Posterior cingulate gyrus (tissue), 11 donors: ENCODE measurements at regions of chr7 and their contacts with region 1.

Region 1: DNA sequence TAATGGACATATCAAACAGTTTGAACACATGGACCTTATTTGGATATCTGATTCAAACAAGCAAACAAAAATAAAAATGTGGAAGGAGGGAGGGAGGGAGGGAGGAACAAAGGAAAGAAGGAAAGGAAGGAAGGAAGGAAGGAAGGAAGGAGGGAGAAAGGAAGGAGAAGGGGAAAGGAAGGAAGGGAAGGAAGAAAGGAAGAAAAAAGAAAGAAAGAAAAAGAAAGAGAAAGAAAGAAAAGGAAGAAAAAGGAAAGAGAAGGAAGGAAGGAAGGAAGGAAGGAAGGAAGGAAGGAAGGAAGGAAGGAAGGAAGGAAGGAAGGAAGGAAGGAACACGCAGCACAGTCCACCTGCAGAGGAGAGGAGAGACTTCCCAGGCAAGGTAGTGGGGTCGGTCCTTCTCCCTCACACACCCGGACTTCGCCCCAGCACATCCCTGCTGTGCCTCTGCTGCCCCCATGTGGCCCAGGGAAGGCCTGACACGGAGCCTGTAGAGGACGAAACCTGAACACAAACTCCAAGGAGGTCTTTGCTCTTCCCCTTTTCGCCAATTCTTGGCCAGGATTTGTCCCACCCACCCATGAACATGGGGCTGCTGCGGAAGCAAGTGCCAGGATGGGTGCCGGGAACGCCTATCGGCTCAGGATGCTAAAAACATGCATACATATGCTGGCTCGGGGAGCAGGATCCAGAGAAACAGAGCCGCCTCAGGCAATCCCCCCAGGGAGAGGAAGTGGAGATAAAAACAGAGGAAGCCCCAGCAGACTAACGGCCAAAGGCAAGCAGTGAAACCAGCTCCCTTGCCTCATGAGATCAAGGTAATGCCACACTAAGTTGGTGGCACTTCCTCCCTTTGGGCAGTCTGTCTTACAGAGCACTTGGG is 52.3 kb upstream of the DGKI start:
- DNase-seq: peak; percentile 70 to 98 (median 86)

Region 2: DNA sequence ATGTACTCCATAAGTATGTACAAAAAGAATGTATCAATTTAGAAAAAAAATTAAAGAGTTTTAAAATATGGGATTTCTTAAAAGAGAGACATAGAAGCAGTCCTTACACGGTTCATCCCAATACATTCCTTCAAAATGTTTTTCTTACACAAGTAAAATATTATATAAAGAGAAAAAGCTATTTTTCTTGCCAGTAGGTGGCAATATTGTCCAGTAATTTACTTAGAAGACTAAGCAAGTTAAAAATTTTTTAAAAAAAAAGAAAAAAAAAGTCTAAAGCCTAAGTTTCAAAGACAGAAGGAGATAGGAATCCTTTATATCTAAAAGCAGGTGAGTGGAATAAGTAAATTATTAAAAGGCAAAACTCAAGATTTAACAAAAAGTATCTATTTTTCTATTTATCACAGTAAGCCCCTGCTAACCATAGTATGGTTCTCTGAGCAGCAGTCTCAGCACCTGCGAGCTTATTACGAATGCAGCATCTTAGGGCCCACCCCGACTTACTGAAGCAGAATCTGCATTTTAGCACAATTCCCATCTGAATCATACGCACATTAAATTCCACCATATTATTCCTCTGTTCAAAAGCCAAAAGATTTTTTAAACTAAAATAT is 292.9 kb before region 1 on chr7:
- intact Hi-C with region 1: loop called (anchors 1 kb)
- DNase-seq: peak in 1 of 10 donors; percentile 35

Region 3: DNA sequence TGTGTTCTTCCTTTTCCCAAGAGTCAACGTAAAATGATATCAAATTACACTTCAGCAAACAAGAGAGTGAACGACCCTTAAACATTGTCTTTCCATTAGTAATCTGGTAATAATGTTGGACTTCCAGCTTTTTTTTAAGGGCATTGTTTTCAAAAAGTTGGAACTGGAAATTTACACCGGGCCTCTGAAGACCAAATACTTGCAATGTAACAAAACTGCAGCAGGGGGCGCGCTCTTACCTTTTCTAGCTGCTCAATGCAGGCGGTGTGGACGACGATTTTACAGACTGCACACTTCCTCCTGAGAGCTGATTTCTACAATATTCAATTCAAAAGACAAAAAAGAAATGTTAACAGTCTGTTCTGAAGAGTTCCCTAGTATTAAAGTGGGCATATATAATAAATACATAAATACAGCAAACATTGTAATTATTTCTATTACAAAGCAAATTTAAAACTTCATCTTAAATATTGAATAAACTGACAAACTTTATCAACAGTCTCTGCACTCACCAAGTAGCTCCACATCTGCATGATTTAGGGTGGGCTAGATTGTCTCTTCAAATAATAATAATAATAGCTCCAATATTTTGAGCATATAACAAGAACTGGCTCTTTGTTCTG is 242.7 kb before region 1 on chr7:
- intact Hi-C with region 1: loop called (anchors 1 kb)
- DNase-seq: peak; percentile 52 to 96 (median 83)

Region 4: GRCh38 chr7:137789215-137789882 is 109.7 kb before region 1 on chr7:
- intact Hi-C with region 1: no loop called
- DNase-seq: no peak

Region 5: GRCh38 chr7:137816696-137817320 is 82.3 kb before region 1 on chr7:
- intact Hi-C with region 1: loop called (anchors 2 kb)
- DNase-seq: no peak

Region 6: GRCh38 chr7:137882261-137882668 is 16.8 kb before region 1 on chr7:
- intact Hi-C with region 1: no loop called
- DNase-seq: peak in 2 of 10 donors; percentile 14 to 74

Region 7: GRCh38 chr7:138008547-138009349 is 109.7 kb after region 1 on chr7:
- intact Hi-C with region 1: loop called (anchors 1 kb)
- DNase-seq: peak in 2 of 10 donors; percentile 16 to 32

Region 8: DNA sequence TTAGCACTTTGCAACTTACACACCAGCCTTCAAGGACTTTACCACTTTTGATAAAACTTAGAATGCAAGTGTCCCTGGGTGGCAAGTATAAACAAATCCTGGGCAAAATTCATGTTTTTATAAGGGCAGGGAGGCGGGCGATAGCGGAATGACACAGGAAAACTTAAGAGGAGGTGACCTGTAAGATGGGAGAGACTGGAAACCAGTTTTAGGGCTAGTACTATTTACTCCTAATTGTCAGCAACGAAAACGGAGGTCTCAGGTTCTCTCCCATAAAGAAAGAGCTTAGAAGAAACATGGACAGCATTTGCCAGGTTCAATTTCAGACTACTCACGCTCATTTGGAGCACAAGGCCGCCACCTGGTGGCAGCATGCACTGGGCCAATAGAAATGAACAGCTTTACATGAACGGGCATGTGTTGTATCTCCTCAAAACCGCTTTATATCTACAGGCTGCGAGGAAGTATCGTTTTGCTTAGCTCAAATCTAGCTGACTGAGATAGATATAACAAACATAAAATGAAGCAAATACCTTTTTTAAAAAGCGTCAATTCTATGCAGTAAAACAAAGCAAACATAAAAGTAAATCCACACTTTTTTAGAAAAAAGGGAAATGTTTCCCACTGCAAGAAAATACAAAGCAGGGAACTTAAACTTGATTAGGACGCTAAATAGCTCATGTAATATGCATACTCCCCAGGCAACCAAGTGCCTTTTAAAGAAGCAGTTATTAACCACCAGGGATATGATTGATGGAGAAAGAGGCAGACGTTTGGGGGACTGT is 839.7 kb after region 1 on chr7:
- intact Hi-C with region 1: loop called (anchors 10 kb)
- DNase-seq: peak; percentile 62 to 98 (median 89)